AG04449 (cell line): ENCODE measurements at regions of chr11 and their contacts with region 1.

Region 1: DNA sequence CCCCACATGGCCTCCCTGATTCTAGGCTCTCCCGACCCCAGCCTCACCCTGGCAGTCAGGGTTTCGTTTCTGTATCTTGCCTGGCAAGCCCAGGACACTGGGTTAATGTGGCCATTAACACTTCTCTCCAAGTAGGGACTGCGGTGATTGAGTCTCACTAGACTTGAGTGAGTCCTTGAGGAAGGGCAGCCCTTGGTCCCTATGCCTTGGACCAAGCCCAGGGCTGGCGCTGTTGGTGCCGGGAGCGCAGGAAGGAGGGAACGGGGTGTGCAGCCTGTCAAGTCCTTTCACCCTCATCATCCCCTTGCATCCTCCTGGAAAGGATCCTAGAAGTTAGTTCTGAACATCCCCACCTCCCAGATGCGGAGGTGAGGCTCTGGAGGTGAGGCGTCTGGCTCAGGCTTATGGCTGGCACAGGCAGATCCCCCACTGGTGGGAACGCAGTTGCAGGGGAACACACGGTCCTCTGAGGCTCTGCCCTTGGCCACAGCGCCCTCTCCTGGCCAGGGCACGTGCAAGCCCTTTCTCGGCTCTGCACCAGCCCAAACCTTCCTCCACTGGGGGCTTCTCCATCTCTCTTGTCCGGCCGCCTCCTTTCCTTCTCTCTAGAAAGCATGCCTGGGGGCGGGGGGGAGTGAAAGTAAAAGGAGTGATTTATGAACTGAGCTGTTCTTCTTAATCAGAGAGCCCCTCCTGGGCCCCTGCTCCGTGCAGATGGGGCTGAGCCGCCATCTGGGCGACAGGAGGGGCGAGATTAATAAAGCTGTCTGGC is 56.7 kb downstream of the TP53I11 start:
- DNase-seq: no peak
- H3K4me3 ChIP-seq: no peak overlapping the region
- CTCF ChIP-seq: peak; percentile 99

Region 2: GRCh38 chr11:44627911-44628729 is 265.9 kb before region 1 on chr11:
- CTCF ChIA-PET with region 1: interaction called, 659 read pairs
- POLR2A ChIA-PET with region 1: no interaction called
- DNase-seq: no peak
- H3K4me3 ChIP-seq: no peak overlapping the region
- CTCF ChIP-seq: no peak

Region 3: DNA sequence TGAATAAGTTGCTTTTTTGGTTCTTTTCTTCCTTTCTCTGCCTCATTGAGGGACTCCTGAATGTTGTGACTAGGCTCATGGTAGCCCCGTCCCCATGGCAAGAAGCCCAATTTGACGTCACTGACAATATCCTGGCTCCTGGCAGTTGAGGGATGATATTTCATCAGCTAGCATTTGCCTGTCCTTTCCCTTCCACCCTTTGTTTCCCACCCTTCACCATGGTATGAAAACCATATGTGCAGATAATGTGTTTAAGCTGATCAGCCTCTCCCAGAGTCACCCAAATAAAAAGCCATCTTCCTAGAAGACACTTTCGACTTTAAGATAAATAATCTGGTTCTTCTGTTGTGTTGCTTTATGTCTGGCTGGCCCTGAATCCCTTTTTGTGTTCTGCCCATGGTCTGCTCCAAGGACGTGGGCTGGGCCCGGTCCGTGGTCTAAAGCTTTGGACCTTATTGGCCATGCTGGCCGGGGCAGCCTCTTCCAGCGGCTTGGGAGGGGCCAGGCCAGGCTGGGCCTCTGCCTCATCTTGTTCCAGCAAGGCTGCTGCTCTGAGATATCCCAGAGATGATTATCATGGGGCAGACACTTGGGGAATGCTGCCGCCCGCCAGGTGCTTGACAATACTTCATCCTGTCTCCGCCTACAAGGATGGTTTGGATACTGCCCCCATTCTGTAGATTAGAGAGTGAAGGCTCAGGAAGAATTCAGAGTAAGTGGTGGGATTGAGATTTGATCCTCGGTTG is 162.2 kb before region 1 on chr11:
- CTCF ChIA-PET with region 1: interaction called, 35 read pairs
- POLR2A ChIA-PET with region 1: no interaction called
- DNase-seq: no peak
- H3K4me3 ChIP-seq: no peak overlapping the region
- CTCF ChIP-seq: no peak

Region 4: DNA sequence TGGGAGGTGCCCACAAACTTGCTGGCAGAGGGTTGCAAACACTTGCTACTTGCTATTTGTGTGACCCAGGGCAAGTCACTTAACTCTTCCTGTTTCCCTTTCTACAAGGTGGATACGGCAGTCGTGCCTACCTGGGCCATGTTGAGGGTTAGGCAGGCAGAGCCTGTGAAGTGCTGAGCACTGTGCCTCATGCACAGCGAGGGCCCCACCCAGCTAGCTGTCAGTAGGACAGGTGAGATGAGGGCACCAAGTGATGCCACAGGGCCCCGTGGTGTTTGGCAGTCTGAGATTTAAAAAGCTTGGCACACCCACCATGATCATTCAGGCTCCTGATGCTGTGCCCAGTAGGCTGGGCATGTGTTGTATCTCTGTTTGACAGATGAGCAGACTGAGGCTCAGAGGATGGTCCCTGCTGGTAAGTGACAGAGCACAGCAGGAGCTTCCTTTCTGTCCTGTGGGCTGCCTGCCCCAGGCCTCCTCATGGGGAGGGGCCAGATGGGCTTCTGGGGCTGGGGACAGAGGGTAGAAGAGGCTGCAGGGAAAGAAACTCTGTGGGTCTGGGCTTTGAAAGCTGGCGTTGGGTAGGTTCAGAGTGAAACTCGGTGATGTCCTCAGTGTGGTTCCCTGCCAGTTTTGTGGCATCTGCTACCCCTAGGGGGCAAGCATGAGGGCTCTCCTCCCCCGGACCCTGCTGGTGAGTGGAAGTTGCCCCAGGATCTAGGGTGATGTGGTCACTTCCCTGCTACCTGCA is 108.0 kb before region 1 on chr11:
- CTCF ChIA-PET with region 1: interaction called, 17 read pairs
- POLR2A ChIA-PET with region 1: no interaction called
- DNase-seq: no peak
- H3K4me3 ChIP-seq: no peak overlapping the region
- CTCF ChIP-seq: peak; percentile 25

Region 5: DNA sequence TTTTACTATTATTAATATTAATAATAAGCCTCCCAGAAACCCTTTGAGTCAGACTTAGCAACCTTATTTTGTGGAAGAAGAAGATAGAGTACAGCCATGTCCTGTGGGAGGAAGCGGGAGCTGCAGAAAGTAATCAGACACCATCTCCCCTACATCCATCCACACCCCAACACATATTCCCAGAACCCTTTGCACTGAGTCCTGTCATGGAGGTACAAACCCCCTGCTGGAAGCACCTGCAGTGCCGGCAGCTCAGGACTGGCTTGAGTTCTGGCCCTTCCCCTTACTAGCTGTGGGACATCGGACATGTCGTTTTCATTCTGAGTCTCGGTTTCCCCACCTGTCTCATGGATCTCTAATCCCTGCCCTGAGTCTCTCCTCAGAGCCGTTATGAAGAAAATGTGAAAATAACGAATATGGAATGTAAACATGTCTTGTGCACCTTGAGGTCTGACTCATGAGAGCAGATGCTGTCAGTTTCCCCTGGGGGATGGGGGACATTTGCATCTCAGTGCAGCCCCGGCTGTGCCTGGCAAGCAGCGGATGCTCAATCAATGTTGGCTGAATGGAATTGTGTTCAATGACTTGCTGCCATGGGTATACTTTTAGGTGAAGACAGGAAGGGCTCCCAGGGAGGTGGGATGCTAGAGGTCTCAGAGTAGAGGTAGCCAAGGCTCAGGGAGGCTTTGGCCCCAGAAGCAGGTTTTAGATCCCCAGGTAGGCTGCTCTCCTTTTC is 11.3 kb after region 1 on chr11:
- CTCF ChIA-PET with region 1: interaction called, 75 read pairs
- POLR2A ChIA-PET with region 1: no interaction called
- DNase-seq: no peak
- H3K4me3 ChIP-seq: no peak overlapping the region
- CTCF ChIP-seq: no peak